Mammary epithelial cell (primary cell): ENCODE measurements at regions of chr1 and their contacts with region 1.

Region 1: GRCh38 chr1:19361611-19362147 is 49.6 kb downstream of the SLC66A1 start:
- DNase-seq: peak; percentile 58
- H3K4me3 ChIP-seq: no peak overlapping the region
- H3K27ac ChIP-seq: peak overlapping the region; percentile 67
- H3K4me1 ChIP-seq: peaks cover 58% of the 10 kb centered on the region
- H3K27me3 ChIP-seq: no peaks in the 10 kb centered on the region
- CTCF ChIP-seq: no peak

Region 2: GRCh38 chr1:19643602-19644394 is 282.1 kb after region 1 on chr1 and contains the start of gene NBL1:
- CTCF ChIA-PET with region 1: no interaction called
- dilution Hi-C with region 1: no loop called
- in situ Hi-C with region 1: loop called in 1 of 2 experiments (anchors 10 kb)
- intact Hi-C with region 1: loop called (anchors 10 kb)
- DNase-seq: peak; percentile 57
- H3K4me3 ChIP-seq: peak within 1 kb of the TSS; percentile 65 to 88 (median 81)
- H3K27ac ChIP-seq: peak within 1 kb of the TSS; percentile 80
- H3K4me1 ChIP-seq: peaks cover 63% of the 10 kb centered on the region
- H3K27me3 ChIP-seq: no peaks in the 10 kb centered on the region
- CTCF ChIP-seq: no peak
- total RNA-seq, gene NBL1: 49.7 to 132 TPM